Right lobe of liver (tissue), 6 donors: ENCODE measurements at regions of chr16 and their contacts with region 1.

Region 1: GRCh38 chr16:4116337-4117249 is at the start of gene ADCY9:
- DNase-seq: peak; percentile 83 to 87 (median 84)
- ATAC-seq: peak; percentile 76 to 84 (median 80)
- H3K4me3 ChIP-seq: peak within 1 kb of the TSS; percentile 54 to 67 (median 64)
- H3K27ac ChIP-seq: peak within 1 kb of the TSS in 2 of 3 donors; percentile 59 to 62
- H3K4me1 ChIP-seq: peaks cover 0 to 33% (median 16%) of the 10 kb centered on the region in 4 donors
- H3K27me3 ChIP-seq: no peaks in the 10 kb centered on the region
- CTCF ChIP-seq: no peak
- POLR2A ChIP-seq: peak; percentile 60
- total RNA-seq, gene ADCY9: 17.3 to 41.5 (median 25.6) TPM

Region 2: DNA sequence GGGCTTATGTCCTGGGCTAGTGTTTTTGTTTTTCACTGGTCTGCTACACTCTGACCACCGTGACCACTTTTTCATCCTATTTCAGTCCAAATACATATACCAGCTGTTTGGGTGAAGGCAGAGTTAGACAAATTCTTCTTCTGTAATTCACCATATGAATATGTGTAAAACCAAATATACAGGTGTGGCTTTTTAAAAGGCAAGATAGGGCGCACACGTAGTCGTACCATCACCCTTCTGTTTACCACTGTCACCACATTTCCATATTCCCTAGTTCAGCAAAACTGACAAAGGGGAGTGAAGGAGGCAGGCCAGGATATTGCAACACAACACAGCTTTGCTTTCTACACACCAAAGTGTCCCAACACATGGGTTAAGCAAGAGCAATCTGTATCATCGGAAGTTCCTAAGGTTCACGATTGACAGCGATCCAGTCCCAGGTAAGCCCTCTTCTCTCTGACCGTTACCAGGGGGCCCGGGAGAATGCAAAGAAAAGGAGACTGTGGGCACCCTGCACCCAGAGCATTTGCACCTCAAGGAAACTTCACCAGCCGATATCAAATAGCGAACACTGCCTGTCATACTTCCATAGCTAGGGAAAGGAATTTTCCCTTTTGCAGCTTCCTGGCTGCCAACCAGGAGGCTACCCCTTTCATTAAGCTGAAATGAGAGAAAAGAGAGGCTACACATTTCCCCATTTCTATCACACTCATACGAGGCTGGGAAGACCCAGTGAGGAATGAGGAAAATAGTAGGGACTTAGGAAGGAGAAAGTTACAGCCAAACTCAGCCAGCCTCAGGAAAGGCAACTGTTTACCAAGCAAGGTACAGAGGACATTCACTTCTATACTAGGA is 259.2 kb before region 1 on chr16:
- intact Hi-C with region 1: no loop called
- DNase-seq: peak in 2 of 3 donors; percentile 39 to 83
- ATAC-seq: peak; percentile 80 to 89 (median 86)
- H3K4me3 ChIP-seq: peak overlapping the region in 1 of 3 donors; percentile 28
- H3K27ac ChIP-seq: peak overlapping the region; percentile 31 to 66 (median 61)
- H3K4me1 ChIP-seq: peaks cover 0 to 80% (median 23%) of the 10 kb centered on the region in 4 donors
- H3K27me3 ChIP-seq: no peaks in the 10 kb centered on the region
- CTCF ChIP-seq: no peak
- POLR2A ChIP-seq: no peak

Region 3: GRCh38 chr16:3915426-3916215 is 201.0 kb before region 1 on chr16:
- intact Hi-C with region 1: no loop called
- DNase-seq: no peak
- ATAC-seq: peak in 1 of 4 donors; percentile 26
- H3K4me3 ChIP-seq: no peak overlapping the region
- H3K27ac ChIP-seq: no peak overlapping the region
- H3K4me1 ChIP-seq: no peaks in the 10 kb centered on the region
- H3K27me3 ChIP-seq: no peaks in the 10 kb centered on the region
- CTCF ChIP-seq: no peak
- POLR2A ChIP-seq: no peak

Region 4: DNA sequence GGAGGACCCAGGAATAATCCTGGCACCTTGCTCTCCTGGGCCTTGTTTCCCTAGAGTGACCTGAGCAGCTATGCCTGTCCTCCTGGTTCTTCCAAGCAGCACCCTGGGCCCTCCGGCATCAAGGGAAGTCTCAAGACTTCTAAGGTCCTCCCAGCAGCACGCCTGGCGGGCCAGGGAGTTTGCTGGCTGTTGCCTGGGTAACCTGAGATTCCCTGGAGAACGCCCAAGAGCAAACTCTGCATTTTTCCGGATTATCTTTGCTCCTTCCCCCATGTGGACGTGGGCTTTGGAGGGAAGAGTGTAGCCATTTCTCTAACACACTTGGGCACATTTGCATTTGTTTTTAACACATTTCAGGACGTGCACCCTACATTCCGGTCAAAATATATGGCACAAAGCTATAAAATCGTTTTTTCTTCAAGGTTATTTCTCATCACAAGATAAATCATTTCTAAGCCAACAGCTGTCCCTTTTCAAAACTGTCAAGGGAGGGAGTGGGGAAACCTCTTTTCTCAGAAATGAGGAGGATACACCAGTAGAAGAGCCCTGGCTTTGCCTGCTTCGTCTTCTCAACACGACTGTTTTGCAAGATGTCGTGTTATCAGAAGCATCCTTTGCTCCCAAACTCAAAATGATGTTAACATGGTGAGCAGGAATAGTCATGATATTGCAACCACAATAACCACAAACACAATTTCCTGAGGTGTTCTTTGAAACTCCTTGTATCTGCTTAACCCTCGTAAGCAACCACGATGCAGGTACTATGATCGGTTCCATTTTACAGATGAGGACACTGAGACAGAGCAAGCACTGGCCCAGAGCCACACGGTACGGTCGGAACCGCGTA is 116.9 kb before region 1 on chr16:
- intact Hi-C with region 1: loop called in 1 of 2 experiments (anchors 10 kb)
- DNase-seq: no peak
- ATAC-seq: peak; percentile 26 to 56 (median 34)
- H3K4me3 ChIP-seq: no peak overlapping the region
- H3K27ac ChIP-seq: no peak overlapping the region
- H3K4me1 ChIP-seq: no peaks in the 10 kb centered on the region
- H3K27me3 ChIP-seq: no peaks in the 10 kb centered on the region
- CTCF ChIP-seq: no peak
- POLR2A ChIP-seq: no peak

Region 5: DNA sequence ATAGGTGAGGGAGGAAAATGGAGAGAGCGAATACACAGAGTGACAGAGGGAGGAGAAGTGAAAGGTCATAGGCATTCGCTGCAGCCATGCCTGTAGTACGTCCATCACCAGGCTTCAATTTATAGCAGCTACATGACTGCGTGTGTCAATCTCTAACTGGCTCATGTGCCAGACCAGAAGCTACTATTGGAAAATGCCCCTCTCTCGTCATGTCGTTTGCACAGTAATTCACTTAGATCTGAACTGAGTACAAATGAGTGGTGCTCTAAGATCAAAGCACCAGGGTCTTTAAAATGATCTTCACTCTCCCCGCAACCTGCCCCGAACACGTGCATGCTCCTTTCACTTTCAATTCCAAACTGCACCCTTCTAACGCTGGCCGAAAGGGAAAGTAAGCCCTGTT is 51.6 kb before region 1 on chr16:
- intact Hi-C with region 1: loop called in 1 of 2 experiments (anchors 10 kb)
- DNase-seq: peak in 1 of 3 donors; percentile 49
- ATAC-seq: peak; percentile 78 to 85 (median 81)
- H3K4me3 ChIP-seq: peak overlapping the region; percentile 9 to 54 (median 47)
- H3K27ac ChIP-seq: peak overlapping the region; percentile 36 to 77 (median 74)
- H3K4me1 ChIP-seq: peaks cover 0 to 18% (median 8%) of the 10 kb centered on the region in 4 donors
- H3K27me3 ChIP-seq: no peaks in the 10 kb centered on the region
- CTCF ChIP-seq: no peak
- POLR2A ChIP-seq: no peak

Region 6: DNA sequence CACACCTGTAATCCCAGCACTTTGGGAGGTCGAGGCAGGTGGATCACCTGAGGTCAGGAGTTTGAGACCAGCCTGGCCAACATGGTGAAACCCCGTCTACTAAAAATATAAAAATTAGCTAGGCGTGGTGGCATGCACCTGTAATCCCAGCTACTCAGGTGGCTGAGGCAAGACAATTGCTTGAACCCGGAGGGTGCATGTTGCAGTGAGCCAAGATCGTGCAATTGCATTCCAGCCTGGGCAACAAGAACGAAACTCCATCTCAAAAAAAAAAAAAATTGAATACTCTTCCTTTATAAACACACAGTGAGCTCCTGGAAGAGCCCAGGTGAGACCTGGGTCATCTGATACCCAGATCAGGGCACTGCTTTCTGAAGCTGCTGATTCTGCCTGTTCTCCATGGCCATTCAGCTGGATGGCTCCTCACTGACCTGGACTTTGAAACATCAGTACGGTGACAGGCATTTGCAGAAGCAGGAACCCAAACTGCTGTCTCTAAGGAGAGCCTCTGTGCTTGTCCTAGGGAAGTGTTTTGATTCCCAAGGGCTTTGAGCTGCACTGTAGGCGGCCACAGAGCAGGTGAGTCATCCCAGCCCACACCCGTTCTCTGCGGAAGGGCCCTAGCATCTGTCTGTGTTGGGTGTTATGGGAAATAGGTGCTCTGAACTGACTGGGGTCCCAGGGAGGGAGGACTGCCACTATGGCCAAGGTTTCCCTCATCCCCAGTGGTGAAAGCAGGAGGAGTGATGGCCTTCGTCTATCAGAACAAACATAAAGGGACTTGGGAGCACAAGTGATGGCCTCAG is 60.2 kb after region 1 on chr16:
- intact Hi-C with region 1: no loop called
- DNase-seq: no peak
- ATAC-seq: peak; percentile 14 to 63 (median 38)
- H3K4me3 ChIP-seq: no peak overlapping the region
- H3K27ac ChIP-seq: no peak overlapping the region
- H3K4me1 ChIP-seq: no peaks in the 10 kb centered on the region
- H3K27me3 ChIP-seq: no peaks in the 10 kb centered on the region
- CTCF ChIP-seq: no peak
- POLR2A ChIP-seq: no peak